Activated CD8-positive, alpha-beta T cell treated with anti-CD3 and anti-CD28 coated beads, Interleukin-2, amount 10 ng/mL, durations not matched to agents 7 days and 5 days (primary cell): ENCODE measurements at regions of chr5 and their contacts with region 1.

Region 1: DNA sequence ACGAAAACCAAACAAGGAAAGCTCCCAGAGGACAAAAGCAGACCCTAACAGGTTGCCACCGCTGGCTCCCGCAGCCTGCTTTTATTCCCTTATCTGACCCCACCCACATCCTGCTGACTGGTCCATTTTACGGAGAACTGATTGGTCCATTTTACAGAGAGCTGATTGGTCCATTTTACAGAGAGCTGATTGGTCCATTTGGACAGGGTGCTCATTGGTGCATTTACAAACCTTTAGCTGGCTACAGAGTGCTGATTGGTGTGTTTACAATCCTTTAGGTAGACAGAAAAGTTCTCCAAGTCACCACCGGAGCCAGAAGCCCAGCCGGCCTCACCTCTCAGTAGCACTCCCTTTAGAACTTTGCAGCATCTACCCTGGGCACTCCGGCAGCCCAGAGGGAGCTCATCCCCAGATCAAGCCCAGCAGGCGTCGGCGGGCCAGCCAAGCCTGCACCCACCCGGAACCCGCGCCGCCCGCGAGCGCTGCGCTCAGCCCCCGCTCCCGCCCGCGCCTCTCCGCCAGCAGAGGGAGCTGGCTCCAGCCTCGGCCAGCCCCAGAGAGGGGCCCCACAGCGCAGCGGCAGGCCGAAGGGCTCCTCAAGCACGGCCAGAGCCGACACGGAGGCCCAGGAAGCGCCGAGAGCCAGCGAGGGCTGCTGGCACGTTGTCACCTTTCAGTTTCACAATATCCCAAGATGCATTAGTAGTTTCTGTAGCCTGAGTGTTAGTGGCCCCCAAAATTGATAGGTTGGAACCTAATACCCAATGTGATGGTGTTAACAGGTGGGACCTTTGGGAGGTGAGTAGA is 35.3 kb upstream of the CLPTM1L start:
- DNase-seq: peak; percentile 60
- ATAC-seq: peak; percentile 97
- H3K4me3 Mint-ChIP-seq: peak overlapping the region; percentile 54
- H3K27ac Mint-ChIP-seq: no peak overlapping the region
- H3K4me1 Mint-ChIP-seq: peaks cover 4% of the 10 kb centered on the region
- H3K27me3 Mint-ChIP-seq: no peaks in the 10 kb centered on the region

Region 2: GRCh38 chr5:1344975-1345838 is 35.0 kb before region 1 on chr5 and contains the start of gene CLPTM1L:
- CTCF ChIA-PET with region 1: interaction called, 15 read pairs
- POLR2A ChIA-PET with region 1: interaction called, 3 read pairs
- DNase-seq: peak; percentile 90
- ATAC-seq: peak; percentile 93
- H3K4me3 Mint-ChIP-seq: peak within 1 kb of the TSS; percentile 82
- H3K27ac Mint-ChIP-seq: peak within 1 kb of the TSS; percentile 84
- H3K4me1 Mint-ChIP-seq: peaks cover 29% of the 10 kb centered on the region
- H3K27me3 Mint-ChIP-seq: no peaks in the 10 kb centered on the region
- total RNA-seq, gene CLPTM1L: 80.0 to 83.8 TPM

Region 3: GRCh38 chr5:1354491-1355033 is 25.7 kb before region 1 on chr5:
- CTCF ChIA-PET with region 1: interaction called, 12 read pairs
- POLR2A ChIA-PET with region 1: no interaction called
- DNase-seq: no peak
- ATAC-seq: no peak
- H3K4me3 Mint-ChIP-seq: no peak overlapping the region
- H3K27ac Mint-ChIP-seq: no peak overlapping the region
- H3K4me1 Mint-ChIP-seq: no peaks in the 10 kb centered on the region
- H3K27me3 Mint-ChIP-seq: peaks cover 12% of the 10 kb centered on the region